Activated B cell treated with CpG ODN at 0.5 μM for 24 hours (primary cell): ENCODE measurements at regions of chr4 and their contacts with region 1.

Region 1: DNA sequence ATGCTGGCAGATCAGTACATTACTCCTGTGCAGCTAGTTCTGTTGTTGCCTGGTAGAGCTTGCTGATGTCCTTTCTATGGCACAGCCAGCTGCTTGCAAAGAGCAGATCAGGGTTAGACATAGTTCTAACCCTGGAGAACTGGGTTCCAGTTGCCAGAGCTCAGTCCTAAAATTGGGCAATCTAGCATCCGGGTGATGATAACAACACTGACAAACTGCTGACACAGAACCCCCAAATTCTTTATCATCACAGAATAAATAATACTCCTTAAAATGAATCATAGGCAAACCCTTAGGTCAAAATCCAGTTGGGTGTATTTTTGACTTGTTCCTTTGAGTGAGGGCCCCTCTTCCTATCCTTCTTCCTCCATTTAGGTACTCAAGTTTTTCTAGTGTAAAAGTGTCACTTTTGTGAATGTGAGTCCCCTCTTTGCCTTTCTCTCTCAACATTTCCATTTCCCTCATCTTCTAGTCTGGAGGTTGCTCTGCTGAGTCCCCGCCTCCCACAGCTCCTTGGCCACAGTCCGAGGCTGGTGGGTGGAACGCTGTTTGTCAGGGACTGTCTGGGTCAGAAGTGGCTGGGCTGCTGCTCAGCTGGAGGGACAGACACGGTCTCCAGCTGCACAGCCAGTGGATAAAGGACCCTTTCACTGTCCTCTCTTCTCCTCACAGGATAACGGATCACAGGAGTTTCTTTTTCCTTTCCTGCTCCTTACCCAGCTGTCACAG is 93.6 kb upstream of the RASGEF1B start:
- DNase-seq: no peak
- ATAC-seq: no peak
- H3K4me3 Mint-ChIP-seq: peak overlapping the region; percentile 44
- H3K27ac Mint-ChIP-seq: peak overlapping the region; percentile 69
- H3K4me1 Mint-ChIP-seq: peaks cover 69% of the 10 kb centered on the region
- H3K27me3 Mint-ChIP-seq: no peaks in the 10 kb centered on the region
- CTCF ChIP-seq: no peak

Region 2: DNA sequence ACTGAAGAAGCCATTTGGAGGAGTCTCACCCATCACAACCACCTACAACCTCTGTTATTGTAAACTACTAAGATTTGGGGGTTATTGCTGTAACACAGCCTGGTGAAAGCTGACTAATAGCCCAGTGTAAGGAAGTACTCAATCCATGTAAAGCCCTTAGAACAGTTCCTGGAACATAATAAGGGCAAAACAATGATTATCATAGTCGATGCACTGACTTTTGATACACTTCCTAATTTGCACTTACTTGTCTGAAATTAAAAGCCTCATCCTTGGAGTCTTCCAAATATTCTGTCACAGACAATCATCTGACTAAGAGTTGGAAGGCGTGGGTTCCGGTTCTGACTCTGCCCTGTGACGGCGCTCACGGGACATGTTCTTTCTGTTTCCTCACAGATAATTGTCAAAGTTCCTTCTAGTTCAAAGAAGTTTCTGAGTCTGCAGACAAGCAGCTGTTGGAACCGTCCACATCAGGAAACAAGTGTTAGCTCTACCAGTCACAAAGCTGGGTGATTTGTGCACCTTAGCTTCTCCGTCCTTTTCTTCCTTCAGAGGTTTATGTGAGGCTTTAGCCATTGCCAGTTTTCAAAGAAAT is 60.2 kb before region 1 on chr4:
- CTCF ChIA-PET with region 1: interaction called, 3 read pairs
- POLR2A ChIA-PET with region 1: interaction called, 6 read pairs
- intact Hi-C with region 1: loop called (anchors 1 kb)
- DNase-seq: no peak
- ATAC-seq: peak; percentile 56
- H3K4me3 Mint-ChIP-seq: peak overlapping the region; percentile 71
- H3K27ac Mint-ChIP-seq: peak overlapping the region; percentile 92
- H3K4me1 Mint-ChIP-seq: peaks cover 86% of the 10 kb centered on the region
- H3K27me3 Mint-ChIP-seq: no peaks in the 10 kb centered on the region
- CTCF ChIP-seq: no peak

Region 3: GRCh38 chr4:81577392-81577791 is 12.1 kb after region 1 on chr4:
- CTCF ChIA-PET with region 1: no interaction called
- POLR2A ChIA-PET with region 1: interaction called, 7 read pairs
- intact Hi-C with region 1: loop called (anchors 1 kb)
- DNase-seq: no peak
- ATAC-seq: peak; percentile 42
- H3K4me3 Mint-ChIP-seq: no peak overlapping the region
- H3K27ac Mint-ChIP-seq: no peak overlapping the region
- H3K4me1 Mint-ChIP-seq: peaks cover 29% of the 10 kb centered on the region
- H3K27me3 Mint-ChIP-seq: no peaks in the 10 kb centered on the region
- CTCF ChIP-seq: no peak

Region 4: DNA sequence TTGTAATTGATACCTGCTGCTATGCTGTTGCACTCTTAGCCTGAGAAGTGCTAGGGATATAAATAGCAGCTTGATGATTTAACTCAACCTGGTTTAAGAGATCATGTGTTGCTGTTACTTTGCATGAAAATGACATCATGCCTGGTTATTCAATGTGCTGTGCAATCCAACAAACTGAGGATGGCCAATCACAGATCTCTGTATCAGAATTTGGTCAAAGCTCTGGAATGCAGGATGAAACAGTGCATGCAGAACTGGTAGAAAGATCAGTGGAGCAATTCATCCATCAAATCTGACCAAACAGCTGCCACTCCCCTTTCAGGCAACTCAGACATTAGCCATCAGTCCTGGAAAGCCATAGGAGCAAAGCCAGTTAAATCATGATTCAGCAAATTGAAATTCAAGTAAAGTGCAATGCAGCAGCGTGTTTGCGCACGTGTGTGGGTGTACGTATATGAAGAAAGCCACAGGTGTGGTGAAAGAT is 66.7 kb after region 1 on chr4:
- CTCF ChIA-PET with region 1: no interaction called
- POLR2A ChIA-PET with region 1: interaction called, 8 read pairs
- intact Hi-C with region 1: loop called (anchors 1 kb)
- DNase-seq: no peak
- ATAC-seq: peak; percentile 57
- H3K4me3 Mint-ChIP-seq: peak overlapping the region; percentile 15
- H3K27ac Mint-ChIP-seq: peak overlapping the region; percentile 60
- H3K4me1 Mint-ChIP-seq: peaks cover 60% of the 10 kb centered on the region
- H3K27me3 Mint-ChIP-seq: no peaks in the 10 kb centered on the region
- CTCF ChIP-seq: no peak